Activated naive CD4-positive, alpha-beta T cell treated with anti-CD3 and anti-CD28 coated beads for 36 hours (primary cell): ENCODE measurements at regions of chr20 and their contacts with region 1.

Region 1: DNA sequence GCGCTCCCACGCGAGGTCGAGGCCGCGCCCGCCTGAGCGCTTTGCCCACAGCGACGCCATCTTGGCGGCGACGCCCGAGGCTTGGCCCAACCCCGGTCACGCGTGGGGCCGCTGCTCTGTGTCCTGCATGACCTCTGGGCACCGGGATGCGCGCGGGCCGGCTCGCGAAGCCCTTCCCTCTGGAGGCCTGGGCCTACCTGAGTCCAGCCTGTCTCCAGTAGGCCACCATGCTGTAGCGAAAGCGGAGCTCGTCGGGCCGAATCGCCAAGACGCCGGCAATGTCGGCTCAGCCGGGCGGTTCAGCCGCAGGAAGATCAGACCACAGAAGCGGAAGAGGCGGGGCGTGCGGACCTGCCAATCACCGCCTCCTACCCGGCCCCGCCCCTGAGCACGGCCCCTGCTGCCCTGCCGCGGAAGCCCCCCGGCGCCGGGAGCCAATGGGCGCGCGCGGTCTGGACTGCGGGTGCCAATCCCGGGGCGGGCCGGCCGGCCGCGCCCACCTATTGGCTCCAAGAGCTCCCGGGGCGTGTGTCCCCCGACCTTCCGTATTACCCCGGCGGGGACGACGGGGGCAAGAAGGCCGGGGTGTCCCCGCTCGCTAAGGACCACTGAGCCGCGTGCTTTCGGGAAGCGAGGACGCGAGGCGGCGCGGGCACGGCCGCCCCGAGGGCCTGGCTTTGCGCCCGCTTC is at the start of gene ATP5F1E:
- DNase-seq: peak; percentile 95
- H3K4me3 Mint-ChIP-seq: peak within 1 kb of the TSS; percentile 94
- H3K27ac Mint-ChIP-seq: peak within 1 kb of the TSS; percentile 93
- H3K4me1 Mint-ChIP-seq: peaks cover 75% of the 10 kb centered on the region
- H3K27me3 Mint-ChIP-seq: no peaks in the 10 kb centered on the region
- total RNA-seq, gene ATP5F1E: 74.5 to 86.3 TPM

Region 2: DNA sequence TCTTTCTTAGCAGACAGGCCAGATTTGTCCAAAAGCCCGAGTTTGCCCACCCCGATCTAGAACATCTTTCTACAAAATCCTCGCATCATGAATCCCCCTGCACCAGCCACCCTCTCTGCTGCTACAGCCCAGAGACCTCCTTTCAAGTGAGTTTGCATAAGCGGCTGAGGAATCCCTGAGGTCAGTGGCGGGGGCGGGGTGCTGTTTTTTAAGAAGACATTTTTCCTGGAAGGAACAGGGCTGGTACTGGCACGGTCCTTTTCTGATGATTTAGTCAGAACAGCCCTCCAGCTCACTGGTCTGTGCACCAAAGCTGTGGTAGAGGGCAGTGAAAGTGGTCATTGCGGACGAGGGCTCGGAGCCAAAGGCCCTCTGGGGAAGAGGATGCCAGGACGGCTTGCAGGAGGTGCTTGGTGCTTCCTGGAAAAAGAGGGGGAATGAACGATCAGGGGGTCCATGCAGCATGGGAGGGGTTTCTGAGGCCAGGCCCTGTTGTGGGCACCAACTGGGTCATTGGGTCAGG is 232.0 kb before region 1 on chr20:
- CTCF ChIA-PET with region 1: no interaction called
- intact Hi-C with region 1: no loop called
- DNase-seq: no peak
- H3K4me3 Mint-ChIP-seq: no peak overlapping the region
- H3K27ac Mint-ChIP-seq: no peak overlapping the region
- H3K4me1 Mint-ChIP-seq: no peaks in the 10 kb centered on the region
- H3K27me3 Mint-ChIP-seq: peaks cover 3% of the 10 kb centered on the region

Region 3: DNA sequence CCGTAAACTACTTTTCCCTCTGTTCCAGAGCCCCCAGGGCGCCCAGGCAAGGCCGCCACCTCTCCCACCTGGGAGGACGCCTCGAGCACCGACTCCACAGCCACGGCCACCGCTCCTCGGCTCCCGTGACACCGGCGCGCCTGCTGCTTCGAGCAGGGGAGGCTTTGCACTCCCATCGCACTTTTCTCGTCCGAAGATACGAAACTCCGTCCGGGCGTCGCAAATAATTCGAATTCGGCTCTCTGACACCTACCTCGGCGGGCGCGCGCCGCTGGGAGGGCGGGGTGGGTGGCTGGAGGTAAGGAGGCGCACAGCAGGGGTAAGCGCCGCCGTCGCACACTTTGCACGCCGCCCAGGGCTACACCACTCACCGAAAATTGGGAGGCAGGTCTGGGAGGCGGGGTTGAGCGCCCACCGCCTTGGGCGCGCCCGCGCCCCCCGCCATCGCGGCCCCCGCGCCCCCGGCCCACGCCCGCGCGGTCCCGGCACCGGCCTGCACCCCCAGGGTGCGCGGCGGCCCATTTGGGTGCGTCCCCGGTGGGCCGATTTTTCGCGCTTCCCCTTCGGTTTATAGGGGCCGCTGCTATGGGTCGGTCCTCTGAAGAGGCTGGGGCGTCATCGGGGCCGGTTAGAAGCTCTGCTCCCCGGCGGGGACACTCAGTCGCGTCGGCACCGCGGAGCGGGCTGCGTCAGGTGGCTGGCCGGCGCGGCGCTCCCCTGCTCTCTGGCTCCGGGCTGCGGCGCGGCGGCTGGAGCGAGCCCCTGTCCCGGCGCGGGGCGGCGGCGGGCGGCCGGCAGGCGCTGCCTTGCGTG is 143.4 kb before region 1 on chr20:
- CTCF ChIA-PET with region 1: interaction called, 4 read pairs
- intact Hi-C with region 1: loop called (anchors 1 kb)
- DNase-seq: peak; percentile 89
- H3K4me3 Mint-ChIP-seq: peak overlapping the region; percentile 84
- H3K27ac Mint-ChIP-seq: no peak overlapping the region
- H3K4me1 Mint-ChIP-seq: peaks cover 27% of the 10 kb centered on the region
- H3K27me3 Mint-ChIP-seq: no peaks in the 10 kb centered on the region

Region 4: DNA sequence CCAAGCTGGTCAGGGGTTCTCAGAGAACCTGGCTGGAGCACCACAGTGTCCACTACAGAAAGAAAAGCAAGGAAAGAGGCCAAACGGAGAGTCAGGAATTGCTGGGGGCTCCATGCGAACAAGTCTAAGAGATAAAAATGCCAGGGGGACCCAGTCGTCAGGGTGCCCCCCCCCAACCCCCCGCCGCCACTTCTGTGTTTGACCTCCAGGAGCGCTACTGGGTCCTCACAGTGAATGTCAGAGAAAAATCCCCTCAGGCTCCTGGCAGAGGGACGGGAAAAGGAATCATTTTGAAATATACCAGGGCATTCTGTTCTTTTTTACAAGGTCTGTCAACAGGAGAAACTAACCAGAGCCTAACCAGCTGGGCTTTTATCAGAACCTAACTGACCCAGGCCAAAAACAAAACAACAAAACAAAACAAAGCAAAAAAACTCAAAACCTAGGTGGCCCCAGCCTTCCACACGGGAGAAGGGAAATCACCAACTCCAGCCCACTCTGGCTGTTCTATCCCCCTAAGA is 69.0 kb before region 1 on chr20:
- CTCF ChIA-PET with region 1: no interaction called
- intact Hi-C with region 1: no loop called
- DNase-seq: no peak
- H3K4me3 Mint-ChIP-seq: no peak overlapping the region
- H3K27ac Mint-ChIP-seq: no peak overlapping the region
- H3K4me1 Mint-ChIP-seq: no peaks in the 10 kb centered on the region
- H3K27me3 Mint-ChIP-seq: no peaks in the 10 kb centered on the region

Region 5: GRCh38 chr20:58980700-58981627 is 51.2 kb before region 1 on chr20 and contains the start of gene NELFCD:
- CTCF ChIA-PET with region 1: no interaction called
- intact Hi-C with region 1: loop called (anchors 1 kb)
- DNase-seq: peak; percentile 87
- H3K4me3 Mint-ChIP-seq: peak within 1 kb of the TSS; percentile 91
- H3K27ac Mint-ChIP-seq: peak within 1 kb of the TSS; percentile 79
- H3K4me1 Mint-ChIP-seq: peaks cover 33% of the 10 kb centered on the region
- H3K27me3 Mint-ChIP-seq: no peaks in the 10 kb centered on the region
- total RNA-seq, gene NELFCD: 102 to 103 TPM

Region 6: DNA sequence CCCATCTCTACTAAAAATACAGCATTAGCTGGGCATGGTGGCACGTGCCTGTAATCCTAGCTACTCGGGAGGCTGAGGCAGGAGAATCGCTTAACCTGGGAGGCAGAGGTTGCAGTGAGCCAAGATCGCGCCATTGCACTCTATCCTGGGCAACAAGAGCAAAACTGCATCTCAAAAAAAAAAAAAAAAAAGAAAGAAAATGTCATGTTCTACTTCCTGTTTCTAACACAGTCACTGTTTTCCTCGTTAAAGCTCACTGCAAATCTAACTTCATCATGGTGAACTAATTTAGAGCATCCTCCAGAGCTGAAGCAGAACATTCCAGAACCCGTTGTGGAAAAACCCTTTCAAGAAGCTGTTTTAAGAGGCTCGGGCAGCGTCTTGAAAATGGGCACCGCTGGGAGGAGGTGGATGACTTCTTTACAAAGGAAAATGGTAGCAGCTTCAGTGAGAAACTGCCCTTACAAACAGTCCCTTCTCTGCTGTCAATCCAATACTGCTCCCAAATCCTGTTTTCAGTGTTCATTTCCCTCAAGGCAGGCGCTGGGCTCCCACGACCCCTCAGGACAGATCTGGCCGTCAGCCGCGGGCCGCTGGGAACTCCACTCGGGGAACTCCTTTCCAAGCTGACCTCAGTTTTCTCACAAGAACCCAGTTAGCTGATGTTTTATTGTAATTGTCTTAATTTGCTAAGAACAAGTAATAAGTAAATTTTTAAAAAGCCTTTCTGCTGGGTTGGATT is 37.6 kb before region 1 on chr20:
- CTCF ChIA-PET with region 1: no interaction called
- intact Hi-C with region 1: no loop called
- DNase-seq: no peak
- H3K4me3 Mint-ChIP-seq: no peak overlapping the region
- H3K27ac Mint-ChIP-seq: no peak overlapping the region
- H3K4me1 Mint-ChIP-seq: peaks cover 3% of the 10 kb centered on the region
- H3K27me3 Mint-ChIP-seq: no peaks in the 10 kb centered on the region

Region 7: GRCh38 chr20:59042796-59043660 is 10.9 kb after region 1 on chr20:
- CTCF ChIA-PET with region 1: interaction called, 6 read pairs
- intact Hi-C with region 1: loop called (anchors 1 kb)
- DNase-seq: peak; percentile 92
- H3K4me3 Mint-ChIP-seq: peak overlapping the region; percentile 93
- H3K27ac Mint-ChIP-seq: peak overlapping the region; percentile 84
- H3K4me1 Mint-ChIP-seq: peaks cover 40% of the 10 kb centered on the region
- H3K27me3 Mint-ChIP-seq: no peaks in the 10 kb centered on the region